Sigmoid colon (tissue), 7 donors: ENCODE measurements at regions of chr14 and their contacts with region 1.

Region 1: DNA sequence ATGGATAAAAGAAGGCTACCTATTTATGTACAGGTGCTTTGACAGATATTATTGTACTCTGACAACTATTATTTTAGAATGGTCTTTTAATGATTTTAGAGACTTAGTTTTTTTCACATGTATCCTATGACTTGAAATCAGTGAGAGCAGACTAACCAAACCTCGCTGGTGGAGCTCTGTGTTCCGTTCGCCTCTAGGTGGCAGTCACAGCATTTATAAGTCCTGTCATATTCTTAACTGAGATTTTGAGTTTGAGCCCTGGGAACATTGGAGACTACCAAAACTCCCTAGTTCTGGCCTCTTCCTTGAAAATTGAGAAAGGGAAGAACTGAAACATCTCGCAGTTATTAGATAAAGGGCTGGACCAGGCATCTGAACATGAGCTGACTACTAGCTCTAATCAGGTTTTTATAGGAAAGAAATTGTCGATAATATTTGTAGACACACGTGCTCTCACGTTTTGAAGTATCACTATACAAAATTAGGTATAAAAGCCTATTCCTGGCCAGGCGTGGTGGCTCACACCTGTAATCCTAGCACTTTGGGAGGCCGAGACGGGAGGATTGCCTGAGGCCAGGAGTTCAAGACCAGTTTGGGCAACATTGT is 48.3 kb downstream of the TTLL5 start:
- DNase-seq: peak; percentile 84
- H3K4me3 ChIP-seq: no peak overlapping the region
- H3K27ac ChIP-seq: no peak overlapping the region
- H3K4me1 ChIP-seq: peaks cover 0 to 23% (median 14%) of the 10 kb centered on the region in 4 donors
- H3K27me3 ChIP-seq: no peaks in the 10 kb centered on the region
- CTCF ChIP-seq: peak; percentile 32 to 77 (median 72)
- EP300 ChIP-seq: no peak
- POLR2A ChIP-seq: no peak

Region 2: DNA sequence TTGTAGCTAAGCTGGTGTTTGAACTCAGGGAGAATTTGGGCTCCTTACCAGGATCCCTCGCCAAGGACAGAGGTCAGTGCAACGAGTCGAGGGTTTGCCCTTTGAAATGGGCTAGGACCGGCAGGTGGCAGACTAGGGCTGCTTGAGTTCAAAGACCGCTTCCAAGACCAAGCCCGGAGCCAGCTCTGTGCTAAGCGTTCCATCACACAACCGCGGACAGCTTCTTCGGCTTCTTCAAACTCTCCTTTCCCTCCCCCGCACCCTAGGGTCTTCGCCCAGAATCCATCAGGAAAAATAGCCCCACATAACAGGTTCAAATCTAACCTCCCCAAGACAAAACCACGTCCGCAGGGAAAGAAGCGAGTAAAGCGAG is 131.6 kb before region 1 on chr14:
- intact Hi-C with region 1: no loop called
- DNase-seq: peak; percentile 92
- H3K4me3 ChIP-seq: peak overlapping the region; percentile 44 to 61 (median 54)
- H3K27ac ChIP-seq: peak overlapping the region; percentile 75 to 85 (median 83)
- H3K4me1 ChIP-seq: peaks cover 0 to 29% (median 20%) of the 10 kb centered on the region in 4 donors
- H3K27me3 ChIP-seq: no peaks in the 10 kb centered on the region
- CTCF ChIP-seq: peak in 3 of 4 experiments; percentile 70 to 77 (median 70)
- EP300 ChIP-seq: no peak
- POLR2A ChIP-seq: no peak

Region 3: GRCh38 chr14:75794615-75795038 is 85.3 kb after region 1 on chr14:
- intact Hi-C with region 1: loop called (anchors 2 kb)
- DNase-seq: no peak
- H3K4me3 ChIP-seq: no peak overlapping the region
- H3K27ac ChIP-seq: peak overlapping the region in 3 of 4 donors; percentile 31 to 57 (median 39)
- H3K4me1 ChIP-seq: peaks cover 0 to 10% (median 1%) of the 10 kb centered on the region in 4 donors
- H3K27me3 ChIP-seq: no peaks in the 10 kb centered on the region
- CTCF ChIP-seq: peak in 3 of 4 experiments; percentile 32 to 37 (median 34)
- EP300 ChIP-seq: no peak
- POLR2A ChIP-seq: no peak

Region 4: GRCh38 chr14:75906676-75907280 is 197.5 kb after region 1 on chr14:
- intact Hi-C with region 1: loop called (anchors 2 kb)
- DNase-seq: peak; percentile 81
- H3K4me3 ChIP-seq: no peak overlapping the region
- H3K27ac ChIP-seq: peak overlapping the region in 1 of 4 donors; percentile 30
- H3K4me1 ChIP-seq: peaks cover 0 to 13% (median 3%) of the 10 kb centered on the region in 4 donors
- H3K27me3 ChIP-seq: no peaks in the 10 kb centered on the region
- CTCF ChIP-seq: peak; percentile 54 to 90 (median 72)
- EP300 ChIP-seq: no peak
- POLR2A ChIP-seq: no peak

Region 5: DNA sequence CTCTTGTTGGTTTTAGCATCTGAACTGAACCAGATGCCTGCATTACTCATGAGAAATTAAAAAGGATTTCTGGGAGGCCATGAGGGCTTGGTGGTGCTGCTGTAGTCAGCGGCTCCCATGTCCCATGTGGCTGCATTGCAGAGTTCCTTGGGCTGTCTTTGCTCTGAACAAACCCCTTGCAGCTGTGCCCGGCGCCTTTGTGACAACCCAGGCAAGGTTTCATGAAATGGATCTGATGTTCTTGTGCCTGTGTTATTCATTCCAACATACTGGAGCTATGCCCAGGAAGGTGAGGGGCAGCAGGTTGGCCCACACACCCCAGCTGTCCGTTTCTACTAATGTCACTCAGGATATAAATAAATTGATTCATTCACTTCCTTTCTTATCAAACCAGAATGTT is 231.7 kb after region 1 on chr14:
- intact Hi-C with region 1: no loop called
- DNase-seq: no peak
- H3K4me3 ChIP-seq: no peak overlapping the region
- H3K27ac ChIP-seq: no peak overlapping the region
- H3K4me1 ChIP-seq: no peaks in the 10 kb centered on the region
- H3K27me3 ChIP-seq: no peaks in the 10 kb centered on the region
- CTCF ChIP-seq: no peak
- EP300 ChIP-seq: no peak
- POLR2A ChIP-seq: no peak

Region 6: GRCh38 chr14:75982266-75983018 is 273.1 kb after region 1 on chr14:
- intact Hi-C with region 1: loop called (anchors 1 kb)
- DNase-seq: peak; percentile 92
- H3K4me3 ChIP-seq: peak overlapping the region; percentile 60 to 81 (median 74)
- H3K27ac ChIP-seq: peak overlapping the region; percentile 94 to 99 (median 96)
- H3K4me1 ChIP-seq: peaks cover 0 to 68% (median 58%) of the 10 kb centered on the region in 4 donors
- H3K27me3 ChIP-seq: no peaks in the 10 kb centered on the region
- CTCF ChIP-seq: peak in 3 of 4 experiments; percentile 34 to 77 (median 47)
- EP300 ChIP-seq: no peak
- POLR2A ChIP-seq: no peak

Region 7: GRCh38 chr14:76352639-76353281 is 643.5 kb after region 1 on chr14:
- intact Hi-C with region 1: loop called (anchors 10 kb)
- DNase-seq: no peak
- H3K4me3 ChIP-seq: peak overlapping the region in 3 of 4 donors; percentile 28 to 41 (median 30)
- H3K27ac ChIP-seq: no peak overlapping the region
- H3K4me1 ChIP-seq: peaks cover 0 to 10% (median 6%) of the 10 kb centered on the region in 4 donors
- H3K27me3 ChIP-seq: peaks cover 0 to 7% (median 4%) of the 10 kb centered on the region in 3 donors
- CTCF ChIP-seq: peak; percentile 66 to 87 (median 74)
- EP300 ChIP-seq: no peak
- POLR2A ChIP-seq: no peak

Region 8: GRCh38 chr14:76386915-76387782 is 677.8 kb after region 1 on chr14:
- intact Hi-C with region 1: loop called (anchors 10 kb)
- DNase-seq: no peak
- H3K4me3 ChIP-seq: no peak overlapping the region
- H3K27ac ChIP-seq: no peak overlapping the region
- H3K4me1 ChIP-seq: no peaks in the 10 kb centered on the region
- H3K27me3 ChIP-seq: peaks cover 0 to 50% (median 7%) of the 10 kb centered on the region in 3 donors
- CTCF ChIP-seq: peak; percentile 57 to 90 (median 72)
- EP300 ChIP-seq: no peak
- POLR2A ChIP-seq: no peak